Upper lobe of right lung (tissue), 1 donor: ENCODE measurements at regions of chr11 and their contacts with region 1.

Region 1: GRCh38 chr11:19071255-19071654 is 10.7 kb upstream of the MRGPRX2 start:
- DNase-seq: peak; percentile 81
- ATAC-seq: peak; percentile 94
- H3K4me3 ChIP-seq: no peak overlapping the region
- H3K27ac ChIP-seq: no peak overlapping the region
- H3K4me1 ChIP-seq: no peaks in the 10 kb centered on the region
- H3K27me3 ChIP-seq: no peaks in the 10 kb centered on the region
- CTCF ChIP-seq: peak; percentile 89

Region 2: GRCh38 chr11:19553683-19554333 is 482.6 kb after region 1 on chr11:
- intact Hi-C with region 1: loop called (anchors 10 kb)
- DNase-seq: peak; percentile 84
- ATAC-seq: peak; percentile 79
- H3K4me3 ChIP-seq: no peak overlapping the region
- H3K27ac ChIP-seq: no peak overlapping the region
- H3K4me1 ChIP-seq: peaks cover 4% of the 10 kb centered on the region
- H3K27me3 ChIP-seq: no peaks in the 10 kb centered on the region
- CTCF ChIP-seq: peak; percentile 87